ENCODE measurements at regions of chr22 and their contacts with region 1.

Region 1: DNA sequence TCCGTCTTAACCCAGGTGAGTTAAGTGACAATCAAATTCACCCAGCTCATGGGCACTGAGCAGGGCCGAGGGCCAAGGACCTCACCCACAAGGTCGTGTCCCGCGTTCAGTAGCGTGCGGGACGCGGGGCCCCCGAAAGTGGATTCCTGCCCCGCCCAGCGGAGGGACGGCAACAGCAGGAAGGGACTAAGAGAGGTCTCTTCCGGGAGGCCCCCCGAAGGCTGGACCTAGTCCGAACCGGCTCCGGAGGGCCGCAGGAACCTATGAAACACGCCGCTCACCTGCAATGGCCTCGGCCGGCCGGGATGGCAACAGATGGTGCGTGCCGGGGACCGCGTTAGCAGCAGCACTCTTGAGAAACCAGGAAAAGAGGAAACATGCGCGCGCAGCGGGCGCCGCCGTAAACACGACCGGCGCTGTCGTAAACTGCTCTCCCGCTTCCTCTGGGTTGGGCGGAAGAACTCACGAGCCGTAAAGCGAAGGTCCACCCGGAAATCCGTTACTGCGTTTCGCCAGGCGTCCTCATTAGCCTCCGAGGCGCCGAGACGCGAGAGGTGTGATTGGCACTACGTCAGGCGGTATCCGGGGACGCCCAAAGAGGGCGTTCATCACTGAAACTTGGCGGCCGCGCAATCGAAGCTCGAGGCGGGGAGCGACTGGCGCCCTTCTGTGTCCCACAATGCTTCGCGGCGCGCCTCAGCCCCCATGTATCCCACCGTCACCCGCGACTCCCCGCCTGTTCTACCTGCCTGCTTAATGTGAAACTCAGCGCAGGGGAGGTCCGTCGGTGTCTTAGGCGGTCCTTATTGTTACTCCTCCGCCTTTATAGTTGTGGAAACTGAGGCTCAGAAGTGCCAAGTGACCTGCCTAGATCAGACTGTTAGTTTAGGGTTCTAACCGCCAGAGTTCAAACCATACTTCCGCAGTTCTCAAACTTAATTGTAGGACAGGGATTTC is at the start of gene EIF3D:
- DNase-seq: peak; percentile 98 to 100 (median 99)
- H3K4me3 ChIP-seq: peak within 1 kb of the TSS; percentile 79 to 94
- H3K4me3 Mint-ChIP-seq: peak within 1 kb of the TSS; percentile 89 to 97 (median 95)
- H3K27ac ChIP-seq: peak within 1 kb of the TSS; percentile 87
- H3K27ac Mint-ChIP-seq: peak within 1 kb of the TSS; percentile 95 to 99 (median 99)
- H3K4me1 ChIP-seq: peaks cover 20% of the 10 kb centered on the region
- H3K4me1 Mint-ChIP-seq: peaks cover 11 to 30% (median 16%) of the 10 kb centered on the region in 4 donors
- H3K27me3 ChIP-seq: no peaks in the 10 kb centered on the region
- H3K27me3 Mint-ChIP-seq: peaks cover 1% of the 10 kb centered on the region in 2 donors
- total RNA-seq, gene EIF3D: 222 to 228 TPM

Region 2: DNA sequence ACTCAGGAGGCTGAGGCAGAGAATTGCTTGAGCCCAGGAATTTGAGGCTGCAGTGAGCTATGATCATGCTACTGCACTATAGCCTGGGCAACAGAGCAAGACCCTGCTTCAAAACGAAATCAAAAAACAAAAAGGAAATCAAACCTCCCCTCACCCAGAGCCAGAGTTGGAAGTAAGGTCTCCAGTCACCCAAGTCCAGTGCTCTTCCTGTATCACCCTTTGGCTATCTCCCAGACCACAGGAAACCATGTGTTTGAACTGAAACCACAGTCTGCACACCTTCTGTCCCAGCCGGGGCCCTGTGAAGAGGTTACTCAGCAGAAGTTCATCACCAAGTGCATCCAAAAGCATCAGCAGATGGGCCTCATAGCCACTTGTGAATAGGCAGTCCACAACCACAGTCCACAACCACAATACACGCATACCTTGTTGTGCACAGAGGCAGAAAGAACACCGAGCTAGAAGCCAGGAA is 145.9 kb before region 1 on chr22:
- CTCF ChIA-PET with region 1: no interaction called
- POLR2A ChIA-PET with region 1: no interaction called
- intact Hi-C with region 1: no loop called
- DNase-seq: peak; percentile 58 to 88 (median 63)
- H3K4me3 ChIP-seq: peak overlapping the region; percentile 25 to 34
- H3K4me3 Mint-ChIP-seq: peak overlapping the region; percentile 81 to 92 (median 89)
- H3K27ac ChIP-seq: peak overlapping the region; percentile 55
- H3K27ac Mint-ChIP-seq: peak overlapping the region; percentile 92 to 99 (median 98)
- H3K4me1 ChIP-seq: peaks cover 64% of the 10 kb centered on the region
- H3K4me1 Mint-ChIP-seq: peaks cover 32 to 84% (median 57%) of the 10 kb centered on the region in 4 donors
- H3K27me3 ChIP-seq: no peaks in the 10 kb centered on the region
- H3K27me3 Mint-ChIP-seq: no peaks in the 10 kb centered on the region

Region 3: GRCh38 chr22:36481393-36482168 is 47.5 kb before region 1 on chr22 and contains the start of gene TXN2:
- CTCF ChIA-PET with region 1: no interaction called
- POLR2A ChIA-PET with region 1: interaction called, 19 read pairs
- intact Hi-C with region 1: loop called (anchors 1 kb)
- DNase-seq: peak; percentile 97 to 99 (median 97)
- H3K4me3 ChIP-seq: peak within 1 kb of the TSS; percentile 80 to 86
- H3K4me3 Mint-ChIP-seq: peak within 1 kb of the TSS; percentile 90 to 100 (median 98)
- H3K27ac ChIP-seq: peak within 1 kb of the TSS; percentile 80
- H3K27ac Mint-ChIP-seq: peak within 1 kb of the TSS; percentile 93 to 100 (median 99)
- H3K4me1 ChIP-seq: peaks cover 22% of the 10 kb centered on the region
- H3K4me1 Mint-ChIP-seq: peaks cover 12 to 31% (median 17%) of the 10 kb centered on the region in 4 donors
- H3K27me3 ChIP-seq: no peaks in the 10 kb centered on the region
- H3K27me3 Mint-ChIP-seq: peaks cover 0 to 3% of the 10 kb centered on the region in 2 donors
- total RNA-seq, gene TXN2: 33.5 to 34.5 TPM

Region 4: DNA sequence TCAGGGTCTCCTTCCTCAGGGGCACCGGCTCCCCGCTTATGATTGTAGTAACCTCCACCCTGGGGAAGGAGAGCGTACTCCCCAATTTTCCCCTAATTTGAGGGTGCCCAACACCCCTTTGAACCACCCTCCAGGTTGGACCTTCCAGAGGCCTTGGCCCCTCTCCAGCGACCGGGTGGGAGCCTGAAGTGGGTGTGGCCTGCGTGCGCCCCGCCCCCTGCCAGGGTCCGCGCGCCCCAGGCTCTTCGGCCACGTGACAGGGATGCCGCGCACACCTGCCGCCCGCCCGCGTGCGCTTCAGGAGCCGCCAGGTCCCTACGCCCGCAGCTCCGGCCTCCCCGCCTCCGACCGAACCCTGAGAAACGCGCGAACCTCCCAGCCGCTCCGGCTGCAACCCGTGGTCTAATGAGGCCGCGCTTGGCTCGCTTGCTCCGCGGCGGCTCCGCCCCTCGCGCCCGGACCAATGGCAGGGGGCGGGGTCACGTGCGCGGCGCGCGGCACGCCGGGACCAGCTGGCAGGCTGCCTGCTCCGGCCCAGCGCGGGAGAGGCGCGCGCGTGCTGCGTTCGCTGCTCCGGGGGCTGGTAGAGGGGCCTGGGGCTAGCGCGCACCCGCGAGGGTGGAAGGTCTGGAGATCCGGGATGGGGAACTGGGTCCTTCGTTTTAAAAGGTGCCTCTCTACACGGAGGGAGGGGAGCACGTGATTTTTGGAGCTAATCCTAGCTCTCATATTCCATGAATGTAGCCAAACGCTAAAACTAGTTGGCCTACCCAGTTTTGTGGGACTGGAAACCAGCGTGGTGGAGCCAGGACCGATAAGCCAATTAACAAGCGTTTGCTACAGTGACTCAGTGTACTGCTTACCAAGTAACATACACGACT is 22.2 kb before region 1 on chr22 and contains the start of gene FOXRED2:
- CTCF ChIA-PET with region 1: interaction called, 4 read pairs
- POLR2A ChIA-PET with region 1: interaction called, 41 read pairs
- intact Hi-C with region 1: loop called (anchors 1 kb)
- DNase-seq: peak; percentile 87 to 91 (median 90)
- H3K4me3 ChIP-seq: peak within 1 kb of the TSS in 1 of 2 donors; percentile 62
- H3K4me3 Mint-ChIP-seq: peak within 1 kb of the TSS; percentile 39 to 79 (median 73)
- H3K27ac ChIP-seq: peak within 1 kb of the TSS; percentile 22
- H3K27ac Mint-ChIP-seq: peak within 1 kb of the TSS; percentile 42 to 83 (median 74)
- H3K4me1 ChIP-seq: peaks cover 15% of the 10 kb centered on the region
- H3K4me1 Mint-ChIP-seq: peaks cover 8 to 25% (median 9%) of the 10 kb centered on the region in 4 donors
- H3K27me3 ChIP-seq: no peaks in the 10 kb centered on the region
- H3K27me3 Mint-ChIP-seq: no peaks in the 10 kb centered on the region
- total RNA-seq, gene FOXRED2: 7.3 to 8.5 TPM